Aorta (tissue), 5 donors: ENCODE measurements at regions of chr10 and their contacts with region 1.

Region 1: DNA sequence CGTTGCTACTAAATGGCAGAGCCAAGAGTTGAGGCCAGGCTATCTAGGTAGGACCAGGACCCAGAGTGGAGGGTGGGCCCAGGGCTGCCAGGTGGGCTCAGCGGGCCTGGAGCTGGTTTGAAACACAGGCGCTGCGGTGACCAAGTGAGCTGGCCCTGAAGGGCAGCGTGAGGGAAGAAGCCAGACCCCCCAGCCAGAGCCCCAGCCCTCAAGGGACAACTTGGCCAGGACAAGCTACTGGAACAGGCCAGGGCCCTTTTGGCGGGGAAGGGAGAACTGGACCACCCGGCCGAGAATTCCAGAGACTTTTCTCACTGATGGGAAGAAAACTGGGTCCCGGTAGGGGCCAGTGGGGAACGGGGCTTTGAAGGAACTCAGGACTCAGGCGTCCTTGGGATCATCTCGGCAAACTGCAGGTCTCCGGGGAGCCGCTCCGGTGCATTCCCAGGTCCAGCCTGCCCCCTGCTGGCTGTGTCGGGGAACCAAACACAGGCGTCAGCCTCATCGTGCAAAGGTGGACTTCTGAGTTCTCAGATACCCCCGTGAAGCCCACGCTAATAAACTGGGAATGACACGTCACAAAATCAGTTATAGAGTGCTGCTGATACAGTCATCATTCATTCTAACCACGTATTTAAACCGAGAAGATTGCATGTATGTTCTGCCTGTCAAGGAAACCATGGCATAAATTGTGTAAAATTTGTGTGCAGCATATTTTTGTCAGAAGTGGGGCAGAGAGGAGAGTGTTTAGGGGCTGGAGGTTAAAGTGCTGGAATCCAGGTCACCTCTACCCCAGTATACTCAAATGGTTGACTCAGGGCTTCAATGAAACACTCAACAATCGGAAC is 76.0 kb upstream of the CPXM2 start:
- DNase-seq: peak; percentile 82 to 93
- ATAC-seq: peak; percentile 89
- H3K4me3 ChIP-seq: no peak overlapping the region
- H3K27ac ChIP-seq: no peak overlapping the region
- H3K4me1 ChIP-seq: no peaks in the 10 kb centered on the region
- H3K27me3 ChIP-seq: no peaks in the 10 kb centered on the region

Region 2: GRCh38 chr10:123759501-123760031 is 208.1 kb before region 1 on chr10:
- intact Hi-C with region 1: loop called in 1 of 2 experiments (anchors 10 kb)
- DNase-seq: no peak
- ATAC-seq: no peak
- H3K4me3 ChIP-seq: no peak overlapping the region
- H3K27ac ChIP-seq: no peak overlapping the region
- H3K4me1 ChIP-seq: no peaks in the 10 kb centered on the region
- H3K27me3 ChIP-seq: no peaks in the 10 kb centered on the region

Region 3: GRCh38 chr10:123782026-123782425 is 185.6 kb before region 1 on chr10:
- intact Hi-C with region 1: loop called in 1 of 2 experiments (anchors 10 kb)
- DNase-seq: no peak
- ATAC-seq: no peak
- H3K4me3 ChIP-seq: no peak overlapping the region
- H3K27ac ChIP-seq: no peak overlapping the region
- H3K4me1 ChIP-seq: no peaks in the 10 kb centered on the region
- H3K27me3 ChIP-seq: no peaks in the 10 kb centered on the region